ENCODE measurements at regions of chr11 and their contacts with region 1.

Region 1: GRCh38 chr11:33161120-33162005 is at the start of gene CSTF3:
- DNase-seq: peak; percentile 100
- H3K4me3 ChIP-seq: peak within 1 kb of the TSS; percentile 55 to 74
- H3K27ac ChIP-seq: peak within 1 kb of the TSS; percentile 79 to 83
- H3K4me1 ChIP-seq: no peaks in the 10 kb centered on the region
- H3K27me3 ChIP-seq: no peaks in the 10 kb centered on the region
- CTCF ChIP-seq: peak; percentile 54 to 94 (median 76)
- POLR2A ChIP-seq: peak; percentile 74
- total RNA-seq, gene CSTF3: 12.5 to 13.3 TPM

Region 2: DNA sequence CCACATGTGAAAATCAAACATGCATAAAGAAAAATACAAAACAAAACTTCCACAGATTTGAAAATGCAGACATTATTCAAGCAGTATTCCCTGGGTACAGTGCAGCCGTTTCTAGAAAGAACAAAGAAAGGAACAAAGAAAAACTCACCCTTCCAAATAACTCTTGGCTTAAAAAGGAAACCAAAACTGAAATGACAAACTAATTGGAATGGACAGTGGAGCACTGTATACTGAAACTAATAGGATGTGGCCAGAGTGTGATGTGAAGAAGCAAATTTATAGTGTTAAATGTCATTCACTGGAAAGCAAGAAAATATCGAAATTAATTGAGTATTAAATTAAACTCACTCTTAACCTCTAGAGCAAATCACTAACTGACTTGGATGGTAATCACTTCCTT is 213.4 kb before region 1 on chr11:
- intact Hi-C with region 1: no loop called
- DNase-seq: no peak
- H3K4me3 ChIP-seq: no peak overlapping the region
- H3K27ac ChIP-seq: no peak overlapping the region
- H3K4me1 ChIP-seq: no peaks in the 10 kb centered on the region
- H3K27me3 ChIP-seq: no peaks in the 10 kb centered on the region
- CTCF ChIP-seq: no peak
- POLR2A ChIP-seq: no peak

Region 3: DNA sequence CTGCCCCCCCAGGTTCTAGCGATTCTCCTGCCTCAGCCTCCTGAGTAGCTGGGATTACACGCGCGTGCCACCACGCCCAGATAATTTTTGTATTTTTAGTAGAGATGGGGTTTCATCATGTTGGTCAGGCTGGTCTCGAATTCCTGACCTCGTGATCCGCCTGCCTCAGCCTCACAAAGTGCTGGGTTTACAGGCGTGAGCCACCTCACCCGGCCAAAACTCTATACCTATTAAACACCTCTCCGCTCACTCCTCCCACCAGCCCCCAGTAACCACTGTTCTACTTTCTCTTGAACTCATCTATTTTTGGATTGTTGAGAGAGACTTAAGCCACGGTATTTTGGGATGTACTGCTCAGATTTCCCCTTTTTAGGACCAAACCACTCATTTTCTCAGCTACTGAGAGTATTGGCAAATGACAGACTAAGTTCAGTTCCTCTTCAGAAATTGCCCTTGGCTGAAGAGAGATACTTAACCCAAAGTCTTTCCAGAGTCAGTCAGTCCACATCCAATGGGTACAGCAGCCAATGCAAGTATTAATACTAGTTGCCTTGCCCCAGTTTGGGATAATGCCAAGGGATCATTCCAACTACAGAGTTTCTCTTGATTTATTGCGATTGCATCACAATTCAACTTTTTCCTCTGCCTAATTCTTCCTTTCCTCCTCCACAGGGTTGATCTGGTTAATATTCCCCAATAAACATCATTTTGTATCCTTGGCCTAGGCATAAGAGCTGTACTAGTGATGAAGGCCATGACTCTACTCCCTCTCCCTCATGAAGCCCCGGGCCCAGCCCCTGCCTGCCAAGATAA is 36.8 kb after region 1 on chr11:
- intact Hi-C with region 1: no loop called
- DNase-seq: no peak
- H3K4me3 ChIP-seq: no peak overlapping the region
- H3K27ac ChIP-seq: no peak overlapping the region
- H3K4me1 ChIP-seq: no peaks in the 10 kb centered on the region
- H3K27me3 ChIP-seq: no peaks in the 10 kb centered on the region
- CTCF ChIP-seq: no peak
- POLR2A ChIP-seq: no peak

Region 4: DNA sequence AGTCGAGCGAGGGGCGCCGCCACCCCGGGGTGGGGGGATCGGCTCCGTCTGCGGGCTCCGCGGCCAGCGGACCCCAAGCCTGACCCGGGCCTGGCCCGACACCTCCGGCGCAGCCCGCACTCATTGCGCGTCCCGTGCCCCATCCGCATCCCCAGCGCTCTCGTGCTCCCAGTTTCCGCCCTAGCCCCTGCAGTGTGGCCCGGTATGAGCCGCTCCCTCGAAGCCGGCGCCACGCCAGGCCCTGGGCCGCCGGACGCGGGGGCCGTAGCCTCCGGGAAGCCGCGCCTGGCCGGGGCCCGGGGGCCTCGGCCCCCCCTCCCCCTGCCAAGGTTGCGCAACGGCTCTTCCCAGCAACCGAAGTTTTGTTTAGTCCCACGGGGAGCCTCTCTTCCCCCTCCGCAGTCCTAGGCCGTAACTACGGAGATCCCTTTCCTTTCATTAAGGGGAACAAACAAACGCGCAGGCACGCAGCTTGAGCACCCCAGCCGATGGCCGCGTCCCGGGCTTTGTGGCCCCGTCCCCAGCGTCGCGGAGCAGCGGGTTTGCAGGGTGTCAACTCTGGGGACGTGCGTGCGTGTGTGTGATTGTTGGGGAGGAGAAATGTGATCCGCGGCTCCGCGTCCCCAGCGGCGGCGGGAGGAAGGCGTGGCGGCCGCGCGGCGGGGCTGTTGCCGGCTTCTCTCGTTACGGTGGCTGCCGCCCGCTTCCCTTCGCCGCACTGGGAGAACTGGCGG is 96.7 kb after region 1 on chr11:
- intact Hi-C with region 1: loop called (anchors 5 kb)
- DNase-seq: peak; percentile 85
- H3K4me3 ChIP-seq: peak overlapping the region; percentile 64 to 95
- H3K27ac ChIP-seq: peak overlapping the region; percentile 99 to 100
- H3K4me1 ChIP-seq: no peaks in the 10 kb centered on the region
- H3K27me3 ChIP-seq: no peaks in the 10 kb centered on the region
- CTCF ChIP-seq: peak in 3 of 4 experiments; percentile 14 to 51 (median 48)
- POLR2A ChIP-seq: peak; percentile 60

Region 5: GRCh38 chr11:33329705-33330329 is 168.5 kb after region 1 on chr11:
- intact Hi-C with region 1: loop called (anchors 1 kb)
- DNase-seq: peak; percentile 45
- H3K4me3 ChIP-seq: no peak overlapping the region
- H3K27ac ChIP-seq: no peak overlapping the region
- H3K4me1 ChIP-seq: no peaks in the 10 kb centered on the region
- H3K27me3 ChIP-seq: no peaks in the 10 kb centered on the region
- CTCF ChIP-seq: peak in 3 of 4 experiments; percentile 57 to 66 (median 58)
- POLR2A ChIP-seq: no peak

Region 6: DNA sequence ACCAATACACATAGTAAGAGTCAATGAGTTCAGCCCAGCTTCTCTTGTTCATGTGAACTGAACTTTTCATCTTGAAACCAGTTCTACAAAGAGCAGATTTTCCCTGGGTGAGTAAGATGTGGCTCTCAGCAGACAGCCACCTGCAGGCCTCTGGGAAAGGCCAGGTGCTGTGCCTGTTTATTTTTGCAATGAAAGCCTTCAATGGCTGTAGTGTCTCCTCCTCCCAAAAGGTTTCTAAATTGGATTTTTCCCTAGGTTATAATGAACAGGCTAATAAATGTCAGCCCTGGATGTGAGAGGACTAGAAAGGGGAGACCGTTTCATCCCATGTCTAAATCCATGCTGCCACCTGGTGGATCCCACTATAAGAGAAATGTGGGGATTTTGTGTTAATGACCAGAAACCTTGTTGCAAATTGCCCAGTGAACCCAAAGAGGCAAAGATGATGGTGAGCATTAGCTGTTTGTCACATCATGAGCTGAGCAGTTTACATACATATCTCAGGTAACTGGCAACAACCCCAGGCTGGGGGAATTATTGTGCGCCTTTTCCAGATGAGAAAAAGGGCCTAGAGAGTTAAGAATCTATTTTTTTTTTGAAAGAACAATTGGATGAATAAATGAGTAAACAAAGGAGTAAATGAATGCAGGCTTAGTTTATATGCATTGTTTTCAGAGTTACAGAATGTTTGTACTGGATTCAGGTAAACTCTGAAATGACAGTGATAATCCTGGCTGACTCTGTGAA is 526.5 kb after region 1 on chr11:
- intact Hi-C with region 1: loop called (anchors 10 kb)
- DNase-seq: peak; percentile 30
- H3K4me3 ChIP-seq: no peak overlapping the region
- H3K27ac ChIP-seq: no peak overlapping the region
- H3K4me1 ChIP-seq: peaks cover 7% of the 10 kb centered on the region
- H3K27me3 ChIP-seq: no peaks in the 10 kb centered on the region
- CTCF ChIP-seq: peak in 3 of 4 experiments; percentile 51 to 68 (median 58)
- POLR2A ChIP-seq: no peak

Region 7: GRCh38 chr11:33736148-33736809 is 574.9 kb after region 1 on chr11 and contains the start of gene CD59:
- intact Hi-C with region 1: loop called (anchors 5 kb)
- DNase-seq: peak; percentile 96
- H3K4me3 ChIP-seq: peak within 1 kb of the TSS; percentile 68 to 81
- H3K27ac ChIP-seq: peak within 1 kb of the TSS; percentile 88 to 91
- H3K4me1 ChIP-seq: no peaks in the 10 kb centered on the region
- H3K27me3 ChIP-seq: no peaks in the 10 kb centered on the region
- CTCF ChIP-seq: peak in 1 of 4 experiments; percentile 9
- POLR2A ChIP-seq: peak; percentile 97
- total RNA-seq, gene CD59: 205 to 274 TPM